ENCODE measurements at regions of chr7 and their contacts with region 1.

Region 1: DNA sequence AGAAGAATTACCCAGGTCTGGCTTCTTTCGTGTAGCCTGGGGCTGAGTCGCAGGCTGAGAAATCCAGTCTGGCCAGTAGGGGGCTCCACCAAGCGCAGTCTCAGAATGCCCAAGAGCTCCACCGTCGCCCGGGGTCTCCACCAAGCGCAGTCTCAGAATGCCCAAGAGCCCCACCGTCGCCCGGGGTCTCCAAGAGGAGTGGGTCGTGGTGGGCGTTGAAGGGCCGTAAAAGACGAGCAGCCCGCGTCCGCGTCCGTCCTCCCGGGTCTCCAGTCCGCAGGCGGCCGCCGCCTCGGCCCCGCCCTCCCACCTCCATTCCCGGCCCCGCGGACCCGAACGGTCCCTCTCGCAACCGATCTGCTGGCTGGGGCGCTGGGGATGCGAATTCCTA is 895 bp upstream of the ZYX start:
- DNase-seq: peak; percentile 91
- H3K4me3 Mint-ChIP-seq: peak overlapping the region; percentile 78
- H3K27ac Mint-ChIP-seq: peak overlapping the region; percentile 91
- H3K4me1 Mint-ChIP-seq: peaks cover 44% of the 10 kb centered on the region
- H3K27me3 Mint-ChIP-seq: no peaks in the 10 kb centered on the region

Region 2: DNA sequence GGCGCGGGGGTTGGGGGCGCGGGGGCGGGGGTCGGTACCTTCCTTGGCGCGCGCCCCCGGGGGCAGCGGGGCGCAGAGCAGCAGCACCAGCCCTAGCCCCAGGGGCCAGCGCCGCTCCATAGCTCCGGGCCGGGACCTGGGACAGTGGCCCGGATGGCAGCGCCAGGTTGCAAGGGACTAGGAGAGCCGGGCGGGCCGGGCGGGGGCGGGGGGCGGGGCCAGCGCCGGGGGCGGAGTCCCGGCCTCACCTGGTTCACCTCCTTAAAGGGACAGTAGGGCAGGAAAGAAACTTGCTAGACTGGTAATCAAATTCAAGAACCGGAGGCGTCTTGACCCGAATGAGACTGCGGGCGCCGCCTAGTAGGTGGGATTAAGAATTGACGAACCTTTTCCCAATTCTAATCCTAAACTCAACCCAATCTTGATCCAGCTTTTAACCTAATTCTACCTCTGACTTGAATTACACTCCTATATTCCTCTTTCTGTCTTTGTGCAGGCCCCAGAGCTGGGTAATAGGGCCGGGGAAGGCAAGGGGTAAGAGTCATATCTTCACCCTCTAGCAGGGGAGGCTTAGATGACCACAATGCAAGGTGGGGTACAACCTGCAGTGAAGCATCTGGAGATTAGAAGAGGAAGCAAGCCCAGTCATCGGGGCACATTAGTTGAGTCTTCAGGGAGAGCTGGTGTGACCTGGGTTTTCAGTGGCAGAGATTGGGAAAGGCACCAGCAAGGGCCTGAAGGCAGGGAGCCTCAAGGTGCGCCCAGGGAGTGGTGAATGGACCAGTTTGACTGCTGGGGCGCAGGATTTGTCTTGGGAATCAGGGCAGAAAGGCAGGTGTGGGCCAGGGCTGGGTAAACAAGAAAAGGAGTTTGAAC is 28.7 kb after region 1 on chr7 and contains the start of gene EPHA1:
- CTCF ChIA-PET with region 1: interaction called, 38 read pairs
- DNase-seq: peak; percentile 65
- H3K4me3 Mint-ChIP-seq: peak within 1 kb of the TSS; percentile 78
- H3K27ac Mint-ChIP-seq: peak within 1 kb of the TSS; percentile 8
- H3K4me1 Mint-ChIP-seq: peaks cover 57% of the 10 kb centered on the region
- H3K27me3 Mint-ChIP-seq: peaks cover 9% of the 10 kb centered on the region

Region 3: GRCh38 chr7:143416565-143417149 is 36.4 kb after region 1 on chr7:
- CTCF ChIA-PET with region 1: interaction called, 38 read pairs
- DNase-seq: no peak
- H3K4me3 Mint-ChIP-seq: no peak overlapping the region
- H3K27ac Mint-ChIP-seq: no peak overlapping the region
- H3K4me1 Mint-ChIP-seq: peaks cover 5% of the 10 kb centered on the region
- H3K27me3 Mint-ChIP-seq: no peaks in the 10 kb centered on the region